ENCODE measurements at regions of chr1 and their contacts with region 1.

Region 1: GRCh38 chr1:54944610-54945544 is 35.6 kb upstream of the TMEM61 start:
- DNase-seq: peak; percentile 82
- H3K4me3 Mint-ChIP-seq: no peak overlapping the region
- H3K27ac Mint-ChIP-seq: peak overlapping the region; percentile 28
- H3K4me1 Mint-ChIP-seq: peaks cover 36% of the 10 kb centered on the region
- H3K27me3 Mint-ChIP-seq: peaks cover 15% of the 10 kb centered on the region

Region 2: DNA sequence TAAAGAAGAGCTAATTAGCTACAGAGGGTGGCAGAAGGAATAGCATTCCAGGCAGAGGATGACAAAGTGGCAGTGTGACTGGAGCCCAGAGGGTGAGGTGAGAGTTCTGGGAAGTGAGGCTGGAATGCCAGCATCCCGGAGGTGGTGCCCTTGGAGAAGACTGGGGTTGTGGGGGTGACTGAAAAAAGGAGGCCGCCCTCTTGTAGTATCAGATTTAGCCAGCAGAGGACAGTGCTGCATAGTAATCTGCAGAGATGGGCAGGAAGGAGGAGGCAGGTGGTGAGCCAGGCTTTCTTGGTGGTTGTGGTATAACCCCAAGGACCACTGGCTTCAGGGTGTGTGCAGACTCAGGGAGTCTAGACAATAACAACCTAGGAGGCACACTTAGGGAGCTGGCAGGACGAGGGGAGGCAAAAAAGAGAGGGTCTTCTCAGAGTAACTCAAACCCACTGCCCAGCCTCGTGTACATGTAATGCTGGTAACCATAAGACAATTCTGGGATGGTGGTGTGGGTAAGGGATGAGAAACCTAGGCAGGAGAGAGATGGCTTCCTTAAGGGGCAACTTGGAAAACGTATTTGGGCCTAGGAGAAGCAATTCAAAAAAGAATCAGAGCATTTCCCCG is 272.8 kb before region 1 on chr1:
- CTCF ChIA-PET with region 1: interaction called, 14 read pairs
- POLR2A ChIA-PET with region 1: no interaction called
- DNase-seq: peak; percentile 85
- H3K4me3 Mint-ChIP-seq: no peak overlapping the region
- H3K27ac Mint-ChIP-seq: no peak overlapping the region
- H3K4me1 Mint-ChIP-seq: peaks cover 18% of the 10 kb centered on the region
- H3K27me3 Mint-ChIP-seq: peaks cover 5% of the 10 kb centered on the region

Region 3: DNA sequence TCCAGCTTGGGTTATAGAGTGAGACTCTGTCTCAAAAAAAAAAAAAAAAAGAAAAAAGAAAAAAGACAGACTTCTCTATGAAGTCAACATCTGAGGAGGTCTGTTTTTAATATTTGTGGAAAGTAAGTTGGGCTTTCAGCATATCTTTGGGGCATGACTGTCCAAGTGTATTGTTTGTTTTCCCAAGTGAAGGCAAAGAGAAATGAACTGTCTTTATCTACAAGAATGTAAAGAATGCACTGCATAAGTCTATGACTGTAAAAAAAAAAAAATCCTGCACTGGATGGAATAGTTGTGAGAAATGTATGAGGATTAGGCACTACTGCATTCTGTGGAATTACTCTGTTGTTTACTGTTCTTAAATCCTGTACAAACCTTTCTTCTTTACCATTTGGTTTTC is 10.0 kb before region 1 on chr1:
- CTCF ChIA-PET with region 1: interaction called, 14 read pairs
- POLR2A ChIA-PET with region 1: no interaction called
- DNase-seq: no peak
- H3K4me3 Mint-ChIP-seq: no peak overlapping the region
- H3K27ac Mint-ChIP-seq: no peak overlapping the region
- H3K4me1 Mint-ChIP-seq: peaks cover 2% of the 10 kb centered on the region
- H3K27me3 Mint-ChIP-seq: peaks cover 54% of the 10 kb centered on the region

Region 4: GRCh38 chr1:54987919-54988705 is 43.2 kb after region 1 on chr1:
- CTCF ChIA-PET with region 1: interaction called, 14 read pairs
- POLR2A ChIA-PET with region 1: no interaction called
- DNase-seq: no peak
- H3K4me3 Mint-ChIP-seq: no peak overlapping the region
- H3K27ac Mint-ChIP-seq: no peak overlapping the region
- H3K4me1 Mint-ChIP-seq: peaks cover 4% of the 10 kb centered on the region
- H3K27me3 Mint-ChIP-seq: peaks cover 8% of the 10 kb centered on the region

Region 5: DNA sequence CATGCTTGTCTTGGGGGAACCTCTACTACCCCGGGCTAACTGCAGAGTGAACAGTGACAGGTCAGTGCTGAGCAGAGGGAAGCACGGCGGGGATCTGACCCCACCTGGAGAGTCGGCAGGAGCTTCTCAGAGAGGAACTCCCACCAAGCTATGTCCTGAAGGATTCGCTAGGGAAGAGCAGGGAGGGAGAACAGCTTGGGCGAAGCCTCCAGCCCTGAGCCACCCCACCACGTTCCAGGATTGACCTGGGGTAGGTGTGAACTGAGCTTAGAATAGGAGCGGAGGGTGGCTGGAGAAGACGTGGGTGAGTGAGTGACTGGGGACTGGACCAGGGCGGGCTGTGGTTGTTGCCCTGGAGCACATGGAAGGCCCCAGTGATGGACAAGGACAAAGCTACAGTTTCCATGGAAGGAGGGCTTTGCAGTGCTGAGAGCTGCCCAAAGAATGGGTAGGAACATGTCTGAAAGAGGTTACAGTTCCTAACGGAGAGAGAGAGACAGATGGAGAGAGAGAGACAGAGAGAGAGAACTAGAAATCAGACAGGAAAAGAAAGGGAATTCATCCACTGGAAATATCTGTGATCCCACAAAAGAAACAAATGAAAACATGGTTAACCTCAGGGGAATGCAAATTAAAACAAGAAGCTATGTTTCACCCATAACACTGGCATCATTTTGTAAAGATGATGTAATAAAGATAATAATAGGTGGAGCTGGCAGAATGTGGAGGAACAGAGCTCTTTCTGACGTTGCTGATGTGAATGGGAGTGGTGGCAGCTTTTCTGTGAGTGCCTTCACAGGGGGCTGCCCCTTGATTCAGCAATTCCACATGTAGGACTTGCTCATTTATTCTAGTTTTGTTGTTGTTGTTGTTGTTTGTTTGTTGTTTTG is 71.1 kb after region 1 on chr1:
- CTCF ChIA-PET with region 1: interaction called, 185 read pairs
- POLR2A ChIA-PET with region 1: no interaction called
- DNase-seq: no peak
- H3K4me3 Mint-ChIP-seq: no peak overlapping the region
- H3K27ac Mint-ChIP-seq: no peak overlapping the region
- H3K4me1 Mint-ChIP-seq: no peaks in the 10 kb centered on the region
- H3K27me3 Mint-ChIP-seq: peaks cover 38% of the 10 kb centered on the region

Region 6: GRCh38 chr1:55064071-55064581 is 119.2 kb after region 1 on chr1:
- CTCF ChIA-PET with region 1: no interaction called
- POLR2A ChIA-PET with region 1: no interaction called
- DNase-seq: no peak
- H3K4me3 Mint-ChIP-seq: no peak overlapping the region
- H3K27ac Mint-ChIP-seq: no peak overlapping the region
- H3K4me1 Mint-ChIP-seq: peaks cover 2% of the 10 kb centered on the region
- H3K27me3 Mint-ChIP-seq: no peaks in the 10 kb centered on the region

Region 7: DNA sequence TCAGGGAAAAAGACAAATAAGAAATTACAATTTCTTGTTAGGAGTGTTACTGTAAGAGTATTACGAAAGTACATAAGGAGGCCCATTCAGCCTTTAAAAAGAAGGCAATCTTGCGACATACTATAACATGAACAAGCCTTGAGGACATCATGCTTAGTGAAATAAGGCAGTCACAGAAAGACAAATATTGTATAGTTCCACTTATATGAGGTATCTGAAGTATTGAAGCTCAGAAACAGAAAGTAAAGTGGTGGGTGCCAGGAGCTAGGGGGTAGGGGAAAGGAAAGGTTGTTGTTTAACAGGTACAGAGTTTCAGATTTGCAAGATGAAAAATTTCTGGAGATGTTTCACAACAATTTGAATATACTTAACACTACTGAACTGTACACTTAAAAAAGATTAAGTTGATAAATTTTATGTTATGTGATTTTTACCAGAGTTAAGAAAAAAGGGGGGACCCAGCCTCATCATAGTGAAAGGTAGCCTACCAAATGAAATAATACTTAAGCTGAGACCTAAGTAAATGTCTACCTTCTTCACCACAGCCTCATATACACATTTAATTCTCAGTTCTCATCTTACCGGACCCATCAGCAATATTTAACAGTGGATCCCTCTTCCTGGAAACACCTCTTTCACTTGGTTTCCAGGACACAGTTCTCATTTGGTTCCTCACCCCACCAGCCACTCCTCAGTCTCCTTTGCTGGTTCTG is 250.8 kb after region 1 on chr1:
- CTCF ChIA-PET with region 1: no interaction called
- POLR2A ChIA-PET with region 1: no interaction called
- DNase-seq: no peak
- H3K4me3 Mint-ChIP-seq: no peak overlapping the region
- H3K27ac Mint-ChIP-seq: no peak overlapping the region
- H3K4me1 Mint-ChIP-seq: peaks cover 44% of the 10 kb centered on the region
- H3K27me3 Mint-ChIP-seq: no peaks in the 10 kb centered on the region

Region 8: GRCh38 chr1:55337801-55338447 is 393.0 kb after region 1 on chr1:
- CTCF ChIA-PET with region 1: interaction called, 11 read pairs
- POLR2A ChIA-PET with region 1: no interaction called
- DNase-seq: peak; percentile 23
- H3K4me3 Mint-ChIP-seq: no peak overlapping the region
- H3K27ac Mint-ChIP-seq: no peak overlapping the region
- H3K4me1 Mint-ChIP-seq: peaks cover 3% of the 10 kb centered on the region
- H3K27me3 Mint-ChIP-seq: peaks cover 7% of the 10 kb centered on the region